ENCODE measurements at regions of chr12 and their contacts with region 1.

Region 1: GRCh38 chr12:67161322-67161918 is 107.7 kb upstream of the CAND1 start:
- DNase-seq: no peak
- ATAC-seq: peak; percentile 75
- H3K4me3 ChIP-seq: no peak overlapping the region
- H3K27ac ChIP-seq: no peak overlapping the region
- H3K4me1 ChIP-seq: no peaks in the 10 kb centered on the region
- H3K27me3 ChIP-seq: peaks cover 34% of the 10 kb centered on the region
- CTCF ChIP-seq: peak; percentile 30 to 75 (median 71); a peak in 5 of 6 replicates
- POLR2A ChIP-seq: no peak
- RAD21 ChIP-seq: peak; percentile 42; the same call in 1 of the 2 replicates

Region 2: GRCh38 chr12:66584673-66585072 is 576.7 kb before region 1 on chr12:
- CTCF ChIA-PET with region 1: no interaction called
- POLR2A ChIA-PET with region 1: no interaction called
- RAD21 ChIA-PET with region 1: no interaction called
- intact Hi-C with region 1: no loop called
- DNase-seq: no peak
- ATAC-seq: no peak
- H3K4me3 ChIP-seq: no peak overlapping the region
- H3K27ac ChIP-seq: no peak overlapping the region
- H3K4me1 ChIP-seq: no peaks in the 10 kb centered on the region
- H3K27me3 ChIP-seq: peaks cover 9% of the 10 kb centered on the region; the same call in 1 of the 2 replicates
- CTCF ChIP-seq: no peak
- POLR2A ChIP-seq: no peak
- RAD21 ChIP-seq: no peak

Region 3: GRCh38 chr12:67002720-67003119 is 158.7 kb before region 1 on chr12:
- CTCF ChIA-PET with region 1: no interaction called
- POLR2A ChIA-PET with region 1: no interaction called
- RAD21 ChIA-PET with region 1: no interaction called
- intact Hi-C with region 1: no loop called
- DNase-seq: no peak
- ATAC-seq: no peak
- H3K4me3 ChIP-seq: no peak overlapping the region
- H3K27ac ChIP-seq: no peak overlapping the region
- H3K4me1 ChIP-seq: no peaks in the 10 kb centered on the region
- H3K27me3 ChIP-seq: peaks cover 56% of the 10 kb centered on the region
- CTCF ChIP-seq: no peak
- POLR2A ChIP-seq: no peak
- RAD21 ChIP-seq: no peak

Region 4: GRCh38 chr12:67014642-67015041 is 146.8 kb before region 1 on chr12:
- CTCF ChIA-PET with region 1: no interaction called
- POLR2A ChIA-PET with region 1: no interaction called
- RAD21 ChIA-PET with region 1: no interaction called
- intact Hi-C with region 1: no loop called
- DNase-seq: no peak
- ATAC-seq: no peak
- H3K4me3 ChIP-seq: no peak overlapping the region
- H3K27ac ChIP-seq: no peak overlapping the region
- H3K4me1 ChIP-seq: no peaks in the 10 kb centered on the region
- H3K27me3 ChIP-seq: peaks cover 45% of the 10 kb centered on the region
- CTCF ChIP-seq: no peak
- POLR2A ChIP-seq: no peak
- RAD21 ChIP-seq: no peak

Region 5: GRCh38 chr12:67148265-67148664 is 13.2 kb before region 1 on chr12:
- CTCF ChIA-PET with region 1: interaction called, 11 read pairs
- POLR2A ChIA-PET with region 1: no interaction called
- RAD21 ChIA-PET with region 1: no interaction called
- intact Hi-C with region 1: no loop called
- DNase-seq: no peak
- ATAC-seq: no peak
- H3K4me3 ChIP-seq: no peak overlapping the region
- H3K27ac ChIP-seq: no peak overlapping the region
- H3K4me1 ChIP-seq: no peaks in the 10 kb centered on the region
- H3K27me3 ChIP-seq: peaks cover 15% of the 10 kb centered on the region; the same call in 1 of the 2 replicates
- CTCF ChIP-seq: no peak
- POLR2A ChIP-seq: no peak
- RAD21 ChIP-seq: no peak

Region 6: GRCh38 chr12:67320614-67321295 is 159.3 kb after region 1 on chr12:
- CTCF ChIA-PET with region 1: no interaction called
- POLR2A ChIA-PET with region 1: no interaction called
- RAD21 ChIA-PET with region 1: no interaction called
- intact Hi-C with region 1: no loop called
- DNase-seq: no peak
- ATAC-seq: no peak
- H3K4me3 ChIP-seq: no peak overlapping the region
- H3K27ac ChIP-seq: no peak overlapping the region
- H3K4me1 ChIP-seq: no peaks in the 10 kb centered on the region
- H3K27me3 ChIP-seq: no peaks in the 10 kb centered on the region
- CTCF ChIP-seq: no peak
- POLR2A ChIP-seq: no peak
- RAD21 ChIP-seq: no peak

Measured in HCT116 (cell line).